Activated CD4-positive, alpha-beta memory T cell treated with anti-CD3 and anti-CD28 coated beads for 36 hours (primary cell): ENCODE measurements at regions of chr4 and their contacts with region 1.

Region 1: GRCh38 chr4:173505924-173506518 is 24.0 kb downstream of the HAND2 start:
- DNase-seq: peak; percentile 64
- H3K4me3 Mint-ChIP-seq: no peak overlapping the region
- H3K27ac Mint-ChIP-seq: no peak overlapping the region
- H3K4me1 Mint-ChIP-seq: peaks cover 30% of the 10 kb centered on the region
- H3K27me3 Mint-ChIP-seq: peaks cover 81% of the 10 kb centered on the region

Region 2: GRCh38 chr4:173752610-173753230 is 246.7 kb after region 1 on chr4:
- CTCF ChIA-PET with region 1: interaction called, 8 read pairs
- POLR2A ChIA-PET with region 1: no interaction called
- intact Hi-C with region 1: loop called (anchors 1 kb)
- DNase-seq: peak; percentile 26
- H3K4me3 Mint-ChIP-seq: no peak overlapping the region
- H3K27ac Mint-ChIP-seq: no peak overlapping the region
- H3K4me1 Mint-ChIP-seq: no peaks in the 10 kb centered on the region
- H3K27me3 Mint-ChIP-seq: no peaks in the 10 kb centered on the region

Region 3: DNA sequence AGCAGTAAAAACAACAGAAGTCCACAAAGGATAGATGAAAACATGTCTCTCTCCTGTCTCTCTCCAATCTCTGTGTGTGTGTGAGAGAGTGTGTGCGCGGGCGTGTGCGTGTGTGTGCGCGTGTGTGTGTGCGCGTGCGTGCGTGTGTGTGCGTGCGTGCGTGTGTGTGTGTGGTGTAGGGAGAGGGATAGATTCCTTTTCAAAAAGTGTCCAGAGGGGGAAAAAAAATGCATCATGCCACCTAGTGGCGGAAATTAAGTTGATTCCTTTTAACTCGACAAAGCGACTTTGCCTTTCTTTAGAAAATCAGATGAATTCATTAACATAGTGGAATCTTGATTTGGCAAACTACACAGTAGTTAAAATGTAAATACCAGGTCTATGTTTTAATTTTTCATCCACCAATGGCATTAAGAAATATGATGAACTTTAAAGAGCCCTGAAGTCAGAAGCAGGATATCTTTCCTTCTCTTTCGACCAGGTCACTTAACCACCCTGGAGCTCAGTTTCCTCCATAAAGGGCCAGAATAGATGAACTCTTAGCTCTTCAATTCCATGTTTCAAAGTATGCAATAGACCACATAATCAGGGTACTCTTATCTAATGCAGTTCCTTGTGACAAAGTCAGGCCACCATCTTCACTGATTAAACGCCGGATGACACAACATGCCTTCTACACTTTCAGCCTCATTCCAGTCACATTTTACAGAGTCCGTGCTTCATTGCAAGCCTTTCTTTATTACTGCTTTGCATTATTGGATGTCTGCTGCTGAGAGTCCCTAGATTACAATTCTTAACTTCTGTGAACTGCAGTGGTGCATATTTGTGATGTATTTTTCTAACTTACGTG is 614.6 kb after region 1 on chr4:
- CTCF ChIA-PET with region 1: interaction called, 6 read pairs
- POLR2A ChIA-PET with region 1: no interaction called
- intact Hi-C with region 1: loop called (anchors 2 kb)
- DNase-seq: peak; percentile 16
- H3K4me3 Mint-ChIP-seq: no peak overlapping the region
- H3K27ac Mint-ChIP-seq: no peak overlapping the region
- H3K4me1 Mint-ChIP-seq: no peaks in the 10 kb centered on the region
- H3K27me3 Mint-ChIP-seq: peaks cover 17% of the 10 kb centered on the region

Region 4: GRCh38 chr4:174156239-174156826 is 650.3 kb after region 1 on chr4:
- CTCF ChIA-PET with region 1: interaction called, 3 read pairs
- POLR2A ChIA-PET with region 1: no interaction called
- intact Hi-C with region 1: loop called (anchors 2 kb)
- DNase-seq: no peak
- H3K4me3 Mint-ChIP-seq: no peak overlapping the region
- H3K27ac Mint-ChIP-seq: no peak overlapping the region
- H3K4me1 Mint-ChIP-seq: no peaks in the 10 kb centered on the region
- H3K27me3 Mint-ChIP-seq: peaks cover 11% of the 10 kb centered on the region

Region 5: GRCh38 chr4:174631901-174632758 is 1126.1 kb after region 1 on chr4:
- CTCF ChIA-PET with region 1: no interaction called
- POLR2A ChIA-PET with region 1: no interaction called
- intact Hi-C with region 1: loop called (anchors 5 kb)
- DNase-seq: no peak
- H3K4me3 Mint-ChIP-seq: no peak overlapping the region
- H3K27ac Mint-ChIP-seq: no peak overlapping the region
- H3K4me1 Mint-ChIP-seq: no peaks in the 10 kb centered on the region
- H3K27me3 Mint-ChIP-seq: no peaks in the 10 kb centered on the region